HEK293 (cell line): ENCODE measurements at regions of chr18 and their contacts with region 1.

Region 1: GRCh38 chr18:37442477-37442876 is 123.1 kb downstream of the CELF4 start:
- H3K4me3 ChIP-seq: no peak overlapping the region
- H3K27ac ChIP-seq: no peak overlapping the region
- H3K4me1 ChIP-seq: no peaks in the 10 kb centered on the region
- CTCF ChIP-seq: no peak

Region 2: GRCh38 chr18:37537868-37538525 is 95.5 kb after region 1 on chr18:
- CTCF ChIA-PET with region 1: interaction called, 11 read pairs
- POLR2A ChIA-PET with region 1: no interaction called
- H3K4me3 ChIP-seq: no peak overlapping the region
- H3K27ac ChIP-seq: no peak overlapping the region
- H3K4me1 ChIP-seq: no peaks in the 10 kb centered on the region
- CTCF ChIP-seq: peak; percentile 65; the same call in 1 of the 2 replicates